Endothelial cell of umbilical vein (primary cell): ENCODE measurements at regions of chr11 and their contacts with region 1.

Region 1: GRCh38 chr11:13384908-13385640 is 77.9 kb downstream of the BTBD10 start:
- DNase-seq: peak; percentile 65
- H3K4me3 ChIP-seq: no peak overlapping the region
- H3K27ac ChIP-seq: no peak overlapping the region
- H3K4me1 ChIP-seq: no peaks in the 10 kb centered on the region
- H3K27me3 ChIP-seq: no peaks in the 10 kb centered on the region
- CTCF ChIP-seq: peak; percentile 50 to 58
- POLR2A ChIP-seq: no peak

Region 2: DNA sequence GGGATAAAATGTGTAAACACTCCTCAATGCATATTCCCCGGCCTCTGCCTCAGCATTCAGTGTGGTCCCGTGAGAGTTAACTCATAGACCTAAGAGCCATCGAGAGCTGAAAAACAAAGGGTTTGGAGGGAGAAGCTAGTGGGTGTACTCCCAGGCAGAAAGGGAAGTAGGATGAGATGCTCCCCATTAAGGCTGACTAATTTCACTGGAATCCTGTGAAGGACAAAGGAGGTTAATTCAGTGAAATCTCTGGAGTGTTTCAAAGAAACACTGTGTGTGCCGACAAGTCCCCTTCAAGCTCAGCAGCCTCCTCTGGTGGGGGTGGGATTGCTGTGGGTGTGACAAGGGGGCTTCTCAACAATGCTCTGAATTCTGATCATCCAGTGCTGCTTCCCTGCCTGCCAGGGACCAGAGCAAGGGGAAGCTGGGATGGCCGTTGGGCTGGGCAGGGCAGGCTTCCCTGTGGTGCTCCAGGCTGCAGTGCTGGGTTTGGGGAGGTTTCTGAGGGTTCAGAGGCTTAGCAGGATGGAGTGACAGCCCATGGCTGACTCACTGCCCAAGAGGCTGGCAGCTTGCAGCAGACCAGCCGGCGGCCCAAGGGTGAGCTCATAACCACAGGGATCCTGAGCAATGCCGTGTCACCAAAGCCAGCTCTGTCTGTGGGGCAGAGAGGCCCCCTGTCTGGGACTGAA is 168.9 kb before region 1 on chr11:
- CTCF ChIA-PET with region 1: interaction called, 59 read pairs
- POLR2A ChIA-PET with region 1: no interaction called
- dilution Hi-C with region 1: no loop called
- intact Hi-C with region 1: no loop called
- DNase-seq: peak; percentile 66
- H3K4me3 ChIP-seq: peak overlapping the region in 1 of 3 experiments; percentile 17
- H3K27ac ChIP-seq: peak overlapping the region; percentile 99
- H3K4me1 ChIP-seq: peaks cover 20% of the 10 kb centered on the region
- H3K27me3 ChIP-seq: no peaks in the 10 kb centered on the region
- CTCF ChIP-seq: no peak
- POLR2A ChIP-seq: peak; percentile 53

Region 3: DNA sequence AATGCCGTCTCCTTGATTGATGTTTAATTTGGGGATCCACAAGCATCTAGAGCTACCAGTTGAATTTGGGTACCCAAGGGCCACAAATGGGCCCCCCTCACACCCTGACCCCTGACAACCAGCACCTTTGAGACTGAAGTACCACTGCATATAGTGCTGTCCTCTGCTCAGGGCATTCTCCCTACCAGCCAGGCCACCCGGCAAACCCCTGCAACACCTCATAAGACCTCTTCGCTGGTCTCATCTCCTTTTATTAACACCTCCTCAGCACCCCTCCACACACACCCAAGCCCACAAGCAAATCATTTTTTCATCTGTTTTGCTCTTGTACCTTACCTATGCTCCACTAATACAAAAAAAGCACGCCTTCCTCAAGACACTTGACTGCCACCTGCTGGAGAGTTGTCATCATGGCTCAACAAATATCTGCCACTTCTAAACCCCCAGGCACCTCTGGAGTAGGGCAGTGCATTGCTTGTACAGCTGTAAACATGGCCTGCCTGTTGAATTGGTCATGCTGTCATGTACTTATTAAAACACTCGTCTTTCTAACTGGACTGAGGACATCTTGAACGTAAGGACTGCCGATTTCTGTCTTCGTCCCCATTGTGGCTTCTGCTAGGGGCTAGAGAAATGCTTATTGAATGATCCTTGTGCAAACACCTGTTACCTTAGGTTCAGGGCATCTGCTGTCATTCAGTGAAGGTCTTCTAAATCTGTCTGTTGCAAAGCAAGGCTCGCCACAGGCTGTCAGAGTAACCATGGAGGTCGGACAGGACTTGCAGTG is 41.0 kb before region 1 on chr11:
- CTCF ChIA-PET with region 1: interaction called, 144 read pairs
- POLR2A ChIA-PET with region 1: no interaction called
- dilution Hi-C with region 1: no loop called
- intact Hi-C with region 1: no loop called
- DNase-seq: peak; percentile 70
- H3K4me3 ChIP-seq: no peak overlapping the region
- H3K27ac ChIP-seq: no peak overlapping the region
- H3K4me1 ChIP-seq: peaks cover 8% of the 10 kb centered on the region
- H3K27me3 ChIP-seq: no peaks in the 10 kb centered on the region
- CTCF ChIP-seq: peak; percentile 73 to 78
- POLR2A ChIP-seq: no peak

Region 4: GRCh38 chr11:13367115-13367514 is 18.0 kb before region 1 on chr11:
- CTCF ChIA-PET with region 1: interaction called, 16 read pairs
- POLR2A ChIA-PET with region 1: no interaction called
- dilution Hi-C with region 1: no loop called
- intact Hi-C with region 1: no loop called
- DNase-seq: no peak
- H3K4me3 ChIP-seq: no peak overlapping the region
- H3K27ac ChIP-seq: no peak overlapping the region
- H3K4me1 ChIP-seq: no peaks in the 10 kb centered on the region
- H3K27me3 ChIP-seq: no peaks in the 10 kb centered on the region
- CTCF ChIP-seq: no peak
- POLR2A ChIP-seq: no peak

Region 5: DNA sequence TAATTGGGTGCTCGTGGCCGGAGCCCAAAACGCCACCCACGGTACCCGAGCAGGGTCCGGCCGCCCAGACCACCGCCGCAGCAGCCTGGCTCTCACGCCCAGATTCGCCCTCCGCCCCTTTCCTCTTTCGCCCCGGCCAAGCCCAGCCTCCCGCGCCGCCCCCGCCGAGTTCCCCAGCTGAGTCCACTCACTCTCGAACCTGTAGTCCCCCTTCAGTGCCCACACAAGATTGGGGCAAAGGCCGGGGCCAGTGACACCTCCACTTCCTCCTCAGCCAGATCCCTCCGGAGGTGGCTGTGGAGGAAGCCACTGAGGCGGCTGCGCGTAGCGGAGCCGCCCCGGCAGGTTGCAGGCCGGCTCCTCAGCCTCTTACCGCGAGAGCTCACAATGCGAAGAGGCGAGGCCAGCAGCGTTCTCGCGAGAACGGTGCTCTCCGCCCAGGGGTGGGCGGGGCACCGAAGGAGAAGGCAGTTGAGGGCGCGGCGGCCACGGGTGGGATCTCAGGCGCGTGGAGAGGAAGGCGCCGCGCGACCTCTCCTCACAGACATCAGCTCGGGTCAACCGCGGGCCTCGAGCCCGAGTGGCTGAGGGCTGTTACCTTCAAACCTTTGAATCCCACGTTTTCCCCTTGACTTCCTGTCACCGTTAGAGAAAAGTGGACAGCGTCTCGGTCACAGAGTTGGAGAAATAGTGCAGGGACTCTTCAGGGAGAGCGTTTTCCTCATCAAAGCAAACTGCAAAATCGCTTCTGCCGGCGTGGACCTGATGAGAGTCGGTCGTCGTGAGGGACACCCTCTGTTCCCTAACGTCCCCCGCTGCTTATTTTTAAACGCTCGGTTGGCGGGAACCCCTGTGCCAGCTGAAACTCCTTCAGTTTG is 78.1 kb after region 1 on chr11 and contains the start of gene BTBD10:
- CTCF ChIA-PET with region 1: interaction called, 52 read pairs
- POLR2A ChIA-PET with region 1: interaction called, 4 read pairs
- dilution Hi-C with region 1: no loop called
- intact Hi-C with region 1: loop called (anchors 1 kb)
- DNase-seq: peak; percentile 97
- H3K4me3 ChIP-seq: peak within 1 kb of the TSS; percentile 13 to 76 (median 70)
- H3K27ac ChIP-seq: peak within 1 kb of the TSS; percentile 60
- H3K4me1 ChIP-seq: peaks cover 26% of the 10 kb centered on the region
- H3K27me3 ChIP-seq: peaks cover 2 to 6% of the 10 kb centered on the region in 2 experiments
- CTCF ChIP-seq: no peak
- POLR2A ChIP-seq: peak; percentile 86
- total RNA-seq, gene BTBD10: 49.6 and 54.8 TPM in 2 replicates